CD8-positive, alpha-beta T cell (primary cell): ENCODE measurements at regions of chr1 and their contacts with region 1.

Region 1: GRCh38 chr1:70910013-70910412 is 137.6 kb downstream of the PTGER3 start:
- DNase-seq: peak in 1 of 9 experiments; percentile 11
- ATAC-seq: no peak
- H3K4me3 ChIP-seq: no peak overlapping the region
- H3K4me3 Mint-ChIP-seq: no peak overlapping the region
- H3K27ac ChIP-seq: no peak overlapping the region
- H3K27ac Mint-ChIP-seq: no peak overlapping the region
- H3K4me1 ChIP-seq: no peaks in the 10 kb centered on the region
- H3K4me1 Mint-ChIP-seq: peaks cover 7% of the 10 kb centered on the region
- H3K27me3 ChIP-seq: no peaks in the 10 kb centered on the region
- H3K27me3 Mint-ChIP-seq: no peaks in the 10 kb centered on the region
- CTCF ChIP-seq: no peak

Region 2: DNA sequence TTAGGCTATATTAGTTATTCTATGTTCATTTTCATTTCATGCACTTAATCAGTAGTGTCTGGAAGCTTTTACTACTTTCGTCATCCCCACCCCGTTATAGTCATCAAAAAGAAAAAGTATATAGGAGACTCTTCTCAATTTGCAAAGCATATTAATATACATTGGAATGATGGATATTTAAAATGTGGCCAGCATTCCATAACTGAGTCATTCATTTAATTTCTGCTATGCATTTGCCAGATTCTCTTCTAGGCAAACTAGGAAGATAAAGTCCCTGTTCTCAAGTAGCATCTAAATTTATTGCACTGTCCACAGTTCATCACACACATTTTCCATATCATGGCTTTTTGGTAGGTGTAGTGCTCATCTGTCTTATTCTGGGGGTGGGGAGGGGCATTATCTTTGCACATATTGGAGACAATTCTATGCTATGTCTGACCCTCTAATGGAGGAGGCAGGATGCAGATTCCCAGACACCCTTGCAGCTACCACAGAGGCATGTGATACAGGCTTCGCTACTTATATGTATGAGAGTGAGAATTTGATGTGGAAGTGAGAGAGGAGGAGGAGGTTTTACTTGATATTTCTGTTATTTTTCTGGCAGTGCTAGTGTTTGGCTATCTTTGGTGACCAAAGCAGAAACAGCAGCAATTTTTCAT is 373.2 kb before region 1 on chr1:
- CTCF ChIA-PET with region 1: no interaction called
- POLR2A ChIA-PET with region 1: no interaction called
- intact Hi-C with region 1: no loop called
- DNase-seq: no peak
- ATAC-seq: no peak
- H3K4me3 ChIP-seq: no peak overlapping the region
- H3K4me3 Mint-ChIP-seq: no peak overlapping the region
- H3K27ac ChIP-seq: no peak overlapping the region
- H3K27ac Mint-ChIP-seq: no peak overlapping the region
- H3K4me1 ChIP-seq: no peaks in the 10 kb centered on the region
- H3K4me1 Mint-ChIP-seq: no peaks in the 10 kb centered on the region
- H3K27me3 ChIP-seq: peaks cover 0 to 2% of the 10 kb centered on the region in 2 experiments
- H3K27me3 Mint-ChIP-seq: peaks cover 7% of the 10 kb centered on the region
- CTCF ChIP-seq: no peak

Region 3: DNA sequence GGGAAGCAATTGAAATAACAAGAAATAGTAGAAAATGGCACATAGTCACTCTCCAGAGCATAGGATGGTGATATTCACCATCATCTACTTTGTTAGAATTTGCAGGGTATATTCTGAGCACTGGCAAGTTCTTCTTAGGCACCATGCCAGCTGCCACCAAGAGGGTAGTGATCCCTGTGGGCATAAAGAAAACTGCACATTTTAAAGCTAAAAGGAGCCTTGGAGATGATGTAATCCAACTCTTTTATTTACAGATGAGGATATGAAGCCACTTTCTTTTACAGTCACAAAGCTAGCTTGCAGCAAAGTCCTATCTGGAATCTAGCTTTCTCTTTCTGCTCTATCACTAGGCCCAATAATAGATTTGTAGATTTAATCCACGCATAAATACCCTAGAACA is 68.6 kb after region 1 on chr1:
- CTCF ChIA-PET with region 1: no interaction called
- POLR2A ChIA-PET with region 1: no interaction called
- intact Hi-C with region 1: loop called in 1 of 2 experiments (anchors 10 kb)
- DNase-seq: no peak
- ATAC-seq: no peak
- H3K4me3 ChIP-seq: no peak overlapping the region
- H3K4me3 Mint-ChIP-seq: no peak overlapping the region
- H3K27ac ChIP-seq: no peak overlapping the region
- H3K27ac Mint-ChIP-seq: no peak overlapping the region
- H3K4me1 ChIP-seq: no peaks in the 10 kb centered on the region
- H3K4me1 Mint-ChIP-seq: no peaks in the 10 kb centered on the region
- H3K27me3 ChIP-seq: no peaks in the 10 kb centered on the region
- H3K27me3 Mint-ChIP-seq: peaks cover 6% of the 10 kb centered on the region
- CTCF ChIP-seq: no peak

Region 4: GRCh38 chr1:70990469-70991253 is 80.6 kb after region 1 on chr1:
- CTCF ChIA-PET with region 1: no interaction called
- POLR2A ChIA-PET with region 1: no interaction called
- intact Hi-C with region 1: no loop called
- DNase-seq: no peak
- ATAC-seq: no peak
- H3K4me3 ChIP-seq: no peak overlapping the region
- H3K4me3 Mint-ChIP-seq: no peak overlapping the region
- H3K27ac ChIP-seq: no peak overlapping the region
- H3K27ac Mint-ChIP-seq: no peak overlapping the region
- H3K4me1 ChIP-seq: no peaks in the 10 kb centered on the region
- H3K4me1 Mint-ChIP-seq: no peaks in the 10 kb centered on the region
- H3K27me3 ChIP-seq: no peaks in the 10 kb centered on the region
- H3K27me3 Mint-ChIP-seq: peaks cover 7% of the 10 kb centered on the region
- CTCF ChIP-seq: no peak

Region 5: GRCh38 chr1:71049951-71050598 is 140.1 kb after region 1 on chr1:
- CTCF ChIA-PET with region 1: no interaction called
- POLR2A ChIA-PET with region 1: no interaction called
- intact Hi-C with region 1: no loop called
- DNase-seq: peak in 3 of 9 experiments; percentile 14 to 72 (median 63)
- ATAC-seq: peak; percentile 57
- H3K4me3 ChIP-seq: no peak overlapping the region
- H3K4me3 Mint-ChIP-seq: no peak overlapping the region
- H3K27ac ChIP-seq: no peak overlapping the region
- H3K27ac Mint-ChIP-seq: no peak overlapping the region
- H3K4me1 ChIP-seq: peaks cover 14% of the 10 kb centered on the region
- H3K4me1 Mint-ChIP-seq: peaks cover 22% of the 10 kb centered on the region
- H3K27me3 ChIP-seq: peaks cover 14 to 17% of the 10 kb centered on the region in 2 experiments
- H3K27me3 Mint-ChIP-seq: peaks cover 32% of the 10 kb centered on the region
- CTCF ChIP-seq: peak; percentile 70